Posterior vena cava (tissue), 2 donors: ENCODE measurements at regions of chr3 and their contacts with region 1.

Region 1: GRCh38 chr3:30704931-30705890 is 98.8 kb downstream of the TGFBR2 start:
- DNase-seq: no peak

Region 2: GRCh38 chr3:30017901-30018300 is 687.3 kb before region 1 on chr3:
- intact Hi-C with region 1: loop called in 1 of 2 experiments (anchors 5 kb)
- DNase-seq: no peak